ENCODE measurements at regions of chr21 and their contacts with region 1.

Region 1: DNA sequence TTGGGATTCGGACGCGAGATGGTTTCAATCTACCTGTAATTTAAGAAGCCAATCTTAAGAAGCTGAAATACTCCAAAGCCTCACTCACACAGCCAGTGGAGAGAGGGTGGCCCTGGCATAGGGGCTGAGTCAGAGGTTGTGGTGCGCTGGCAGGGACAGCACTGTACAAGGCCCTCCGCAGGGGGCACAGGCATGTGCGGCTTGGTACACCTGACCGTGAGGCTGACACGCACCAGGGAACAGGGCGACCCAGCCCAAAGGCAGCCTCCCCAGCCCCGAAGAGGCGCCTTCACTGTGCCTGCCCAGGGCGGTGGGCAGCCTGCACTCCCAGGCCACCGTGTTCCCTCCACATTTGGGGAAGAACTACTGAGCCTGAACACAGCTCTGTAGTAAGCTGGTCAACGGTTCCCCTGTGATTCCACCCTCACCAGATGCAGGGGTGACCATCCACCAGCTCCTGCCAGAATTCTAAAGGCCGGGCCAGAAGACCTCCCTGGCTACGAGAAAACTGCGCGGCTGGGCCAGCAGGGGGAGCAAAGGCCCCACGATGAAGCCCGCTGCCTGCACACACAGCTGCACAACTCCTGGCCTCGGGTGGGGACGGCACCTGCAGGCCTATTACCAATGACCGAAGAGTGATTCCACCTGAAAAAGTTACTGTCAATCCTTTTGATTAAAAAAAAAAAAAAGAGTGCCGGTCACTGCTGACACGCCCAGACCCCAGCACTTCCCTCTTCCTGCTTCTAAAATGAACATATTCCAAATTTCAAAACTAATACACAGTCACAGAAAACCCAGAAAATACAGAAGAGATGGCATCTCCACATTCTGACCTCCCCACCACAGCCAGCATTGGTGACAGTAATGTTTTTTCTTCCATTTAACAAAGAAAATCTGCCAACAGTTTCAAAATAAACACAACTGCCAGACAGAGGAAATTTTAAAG is 49.6 kb upstream of the RIPK4 start:
- H3K4me3 ChIP-seq: no peak overlapping the region
- H3K27ac ChIP-seq: no peak overlapping the region
- H3K4me1 ChIP-seq: no peaks in the 10 kb centered on the region
- CTCF ChIP-seq: peak; percentile 63; the same call in 1 of the 2 replicates

Region 2: GRCh38 chr21:41283211-41283818 is 533.2 kb before region 1 on chr21:
- CTCF ChIA-PET with region 1: interaction called, 17 read pairs
- POLR2A ChIA-PET with region 1: no interaction called
- H3K4me3 ChIP-seq: no peak overlapping the region
- H3K27ac ChIP-seq: no peak overlapping the region
- H3K4me1 ChIP-seq: no peaks in the 10 kb centered on the region
- CTCF ChIP-seq: peak; percentile 58

Region 3: DNA sequence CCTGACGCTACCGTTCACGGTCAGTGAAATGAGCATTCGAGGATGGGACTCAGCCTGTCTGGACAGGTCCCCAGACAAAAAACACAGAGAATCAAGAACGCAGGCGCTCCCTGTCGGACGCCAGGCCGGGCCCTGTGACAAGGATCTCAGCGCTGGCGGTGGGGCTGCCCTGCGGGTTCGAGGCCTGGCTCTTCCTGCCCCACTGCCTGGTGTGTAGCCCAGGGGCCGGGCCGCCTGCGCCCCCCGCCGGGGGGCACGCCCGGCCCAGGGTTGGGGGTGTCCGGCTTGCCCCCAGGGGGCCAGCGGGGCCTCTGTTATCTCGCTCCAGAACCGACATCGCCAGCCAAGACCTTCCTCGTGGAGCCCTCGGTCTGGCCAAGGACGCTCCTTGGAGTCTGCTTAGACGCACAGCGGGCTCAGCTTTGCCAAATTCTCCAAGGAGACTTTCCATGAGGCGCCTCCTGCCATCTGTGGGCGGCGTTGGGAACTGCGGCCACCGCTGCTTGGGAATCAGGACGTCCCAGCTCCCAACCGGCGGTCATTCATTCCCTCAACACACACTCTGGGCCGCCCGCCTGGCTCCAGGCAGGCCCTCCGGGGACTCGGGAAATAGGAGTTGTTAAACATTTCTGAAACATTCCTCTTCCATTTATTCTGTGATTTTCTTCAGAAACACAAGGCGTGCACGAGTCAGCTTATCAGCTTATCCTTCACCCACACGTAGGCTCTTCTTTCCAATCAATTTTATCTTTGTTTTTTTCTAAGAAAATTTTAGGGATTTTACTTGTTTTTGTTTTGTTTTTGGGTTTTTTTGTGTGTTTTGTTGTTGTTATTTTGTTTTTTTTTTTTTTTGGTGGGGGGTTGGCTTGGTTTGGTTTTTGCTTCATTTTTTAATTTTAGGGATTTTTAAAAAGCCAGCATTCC is 38.3 kb before region 1 on chr21:
- CTCF ChIA-PET with region 1: interaction called, 17 read pairs
- POLR2A ChIA-PET with region 1: no interaction called
- H3K4me3 ChIP-seq: no peak overlapping the region
- H3K27ac ChIP-seq: no peak overlapping the region; the same call in 1 of the 2 replicates
- H3K4me1 ChIP-seq: peaks cover 15% of the 10 kb centered on the region; the same call in 1 of the 2 replicates
- CTCF ChIP-seq: peak; percentile 71

Region 4: GRCh38 chr21:41828481-41829360 is 12.2 kb after region 1 on chr21:
- CTCF ChIA-PET with region 1: interaction called, 41 read pairs
- POLR2A ChIA-PET with region 1: no interaction called
- H3K4me3 ChIP-seq: no peak overlapping the region
- H3K27ac ChIP-seq: no peak overlapping the region
- H3K4me1 ChIP-seq: no peaks in the 10 kb centered on the region
- CTCF ChIP-seq: no peak

Region 5: GRCh38 chr21:41847066-41847804 is 30.7 kb after region 1 on chr21:
- CTCF ChIA-PET with region 1: interaction called, 14 read pairs
- POLR2A ChIA-PET with region 1: no interaction called
- H3K4me3 ChIP-seq: no peak overlapping the region
- H3K27ac ChIP-seq: no peak overlapping the region
- H3K4me1 ChIP-seq: no peaks in the 10 kb centered on the region
- CTCF ChIP-seq: no peak

Region 6: GRCh38 chr21:41888749-41889376 is 72.4 kb after region 1 on chr21:
- CTCF ChIA-PET with region 1: no interaction called
- POLR2A ChIA-PET with region 1: no interaction called
- H3K4me3 ChIP-seq: no peak overlapping the region
- H3K27ac ChIP-seq: no peak overlapping the region
- H3K4me1 ChIP-seq: no peaks in the 10 kb centered on the region
- CTCF ChIP-seq: no peak

Region 7: GRCh38 chr21:42117229-42117966 is 300.9 kb after region 1 on chr21:
- CTCF ChIA-PET with region 1: interaction called, 39 read pairs
- POLR2A ChIA-PET with region 1: no interaction called
- H3K4me3 ChIP-seq: no peak overlapping the region
- H3K27ac ChIP-seq: no peak overlapping the region
- H3K4me1 ChIP-seq: no peaks in the 10 kb centered on the region
- CTCF ChIP-seq: peak; percentile 82; the same call in 1 of the 2 replicates

Measured in HEK293 (cell line).